ENCODE measurements at regions of chr9 and their contacts with region 1.

Region 1: GRCh38 chr9:73023025-73023541 is 70.2 kb upstream of the ALDH1A1 start:
- DNase-seq: peak; percentile 64
- H3K27ac ChIP-seq: no peak overlapping the region
- CTCF ChIP-seq: peak; percentile 91

Region 2: DNA sequence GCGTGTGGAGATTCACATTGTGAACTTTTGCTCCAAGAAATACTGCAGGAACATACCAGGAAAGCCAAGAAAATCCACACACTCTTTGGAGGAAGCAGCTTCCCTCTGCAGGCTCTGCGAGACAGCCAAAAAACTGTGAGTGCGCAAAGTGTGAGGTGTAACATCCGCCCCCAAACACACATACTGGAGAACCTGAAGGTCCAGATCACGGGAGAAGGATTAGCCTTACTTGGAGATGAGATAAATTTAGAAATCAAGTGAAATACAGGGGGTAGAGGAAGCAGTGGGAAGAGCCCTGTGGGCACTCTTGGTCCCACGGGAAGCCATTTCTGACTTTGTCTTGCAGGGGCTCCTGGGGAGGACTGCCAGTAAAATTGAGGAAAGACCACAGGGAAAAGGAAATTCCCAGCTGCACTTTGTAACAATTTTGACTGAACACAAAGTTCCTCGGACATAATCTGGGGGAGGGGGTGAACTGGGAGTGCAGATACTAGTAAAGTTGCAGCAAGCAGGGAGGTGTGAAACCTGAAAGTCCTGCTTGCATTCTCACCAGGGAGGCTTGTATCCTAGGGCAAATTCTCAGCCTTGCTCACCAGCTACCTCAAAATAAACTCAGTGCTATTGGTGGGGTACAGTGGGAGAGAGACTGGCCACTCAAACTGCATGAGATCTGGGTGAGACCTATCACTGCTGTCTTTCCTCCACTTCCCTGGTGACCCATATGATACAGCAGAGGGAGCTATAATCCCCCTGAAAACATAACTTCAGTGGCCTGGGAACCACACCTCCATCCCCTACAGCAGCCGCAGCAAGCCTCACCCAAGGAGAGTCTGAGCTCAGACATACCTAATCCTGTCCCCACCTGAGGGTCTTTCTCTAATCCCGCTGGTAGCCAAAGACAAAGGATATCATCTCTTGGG is 179.3 kb before region 1 on chr9:
- CTCF ChIA-PET with region 1: no interaction called
- POLR2A ChIA-PET with region 1: no interaction called
- DNase-seq: no peak
- H3K27ac ChIP-seq: no peak overlapping the region
- CTCF ChIP-seq: no peak

Region 3: GRCh38 chr9:72856972-72857623 is 166.0 kb before region 1 on chr9:
- CTCF ChIA-PET with region 1: interaction called, 27 read pairs
- POLR2A ChIA-PET with region 1: no interaction called
- DNase-seq: peak; percentile 44
- H3K27ac ChIP-seq: no peak overlapping the region
- CTCF ChIP-seq: peak; percentile 67